ENCODE measurements at regions of chr14 and their contacts with region 1.

Region 1: GRCh38 chr14:24734878-24735500 is 101.0 kb upstream of the GZMB start:
- DNase-seq: peak in 1 of 2 donors; percentile 8
- ATAC-seq: peak in 1 of 2 donors; percentile 23
- H3K4me3 ChIP-seq: no peak overlapping the region
- H3K27ac ChIP-seq: no peak overlapping the region
- H3K4me1 ChIP-seq: no peaks in the 10 kb centered on the region
- H3K27me3 ChIP-seq: no peaks in the 10 kb centered on the region
- CTCF ChIP-seq: peak; percentile 25 to 64 (median 46)
- POLR2A ChIP-seq: no peak

Region 2: DNA sequence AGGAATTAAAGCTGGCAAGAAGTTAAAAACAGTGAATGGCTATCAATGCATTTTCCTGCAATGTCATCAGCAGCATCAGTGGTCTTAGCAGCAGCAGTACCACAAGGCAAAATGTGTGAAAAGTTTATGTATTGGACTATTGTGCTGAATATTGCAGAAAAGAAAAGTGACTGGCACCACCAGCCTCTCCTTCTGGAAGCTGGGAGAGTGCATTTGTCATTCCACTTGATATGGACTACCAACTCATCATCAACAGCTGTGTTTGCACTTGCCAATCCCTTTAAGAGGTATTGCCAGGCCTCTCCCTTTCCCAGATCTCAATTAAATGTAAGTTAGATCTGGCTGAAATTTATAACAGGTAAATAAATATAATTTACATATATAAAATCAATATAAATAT is 50.0 kb after region 1 on chr14:
- in situ Hi-C with region 1: no loop called
- intact Hi-C with region 1: no loop called
- DNase-seq: no peak
- ATAC-seq: no peak
- H3K4me3 ChIP-seq: no peak overlapping the region
- H3K27ac ChIP-seq: no peak overlapping the region
- H3K4me1 ChIP-seq: peaks cover 0 to 3% of the 10 kb centered on the region in 2 donors
- H3K27me3 ChIP-seq: no peaks in the 10 kb centered on the region
- CTCF ChIP-seq: no peak
- POLR2A ChIP-seq: no peak

Region 3: GRCh38 chr14:25132732-25133422 is 397.9 kb after region 1 on chr14:
- in situ Hi-C with region 1: loop called in 2 of 4 experiments (anchors 10 kb)
- intact Hi-C with region 1: loop called (anchors 1 kb)
- DNase-seq: peak; percentile 10 to 24
- ATAC-seq: peak; percentile 62 to 66
- H3K4me3 ChIP-seq: no peak overlapping the region
- H3K27ac ChIP-seq: no peak overlapping the region
- H3K4me1 ChIP-seq: no peaks in the 10 kb centered on the region
- H3K27me3 ChIP-seq: no peaks in the 10 kb centered on the region
- CTCF ChIP-seq: peak; percentile 32 to 74 (median 63)
- POLR2A ChIP-seq: no peak

Region 4: GRCh38 chr14:25150934-25151790 is 416.2 kb after region 1 on chr14:
- in situ Hi-C with region 1: loop called in 2 of 4 experiments (anchors 5 to 10 kb)
- intact Hi-C with region 1: loop called (anchors 5 kb)
- DNase-seq: no peak
- ATAC-seq: no peak
- H3K4me3 ChIP-seq: no peak overlapping the region
- H3K27ac ChIP-seq: no peak overlapping the region
- H3K4me1 ChIP-seq: no peaks in the 10 kb centered on the region
- H3K27me3 ChIP-seq: no peaks in the 10 kb centered on the region
- CTCF ChIP-seq: peak; percentile 27 to 71 (median 42)
- POLR2A ChIP-seq: no peak